ENCODE measurements at regions of chr7 and their contacts with region 1.

Region 1: DNA sequence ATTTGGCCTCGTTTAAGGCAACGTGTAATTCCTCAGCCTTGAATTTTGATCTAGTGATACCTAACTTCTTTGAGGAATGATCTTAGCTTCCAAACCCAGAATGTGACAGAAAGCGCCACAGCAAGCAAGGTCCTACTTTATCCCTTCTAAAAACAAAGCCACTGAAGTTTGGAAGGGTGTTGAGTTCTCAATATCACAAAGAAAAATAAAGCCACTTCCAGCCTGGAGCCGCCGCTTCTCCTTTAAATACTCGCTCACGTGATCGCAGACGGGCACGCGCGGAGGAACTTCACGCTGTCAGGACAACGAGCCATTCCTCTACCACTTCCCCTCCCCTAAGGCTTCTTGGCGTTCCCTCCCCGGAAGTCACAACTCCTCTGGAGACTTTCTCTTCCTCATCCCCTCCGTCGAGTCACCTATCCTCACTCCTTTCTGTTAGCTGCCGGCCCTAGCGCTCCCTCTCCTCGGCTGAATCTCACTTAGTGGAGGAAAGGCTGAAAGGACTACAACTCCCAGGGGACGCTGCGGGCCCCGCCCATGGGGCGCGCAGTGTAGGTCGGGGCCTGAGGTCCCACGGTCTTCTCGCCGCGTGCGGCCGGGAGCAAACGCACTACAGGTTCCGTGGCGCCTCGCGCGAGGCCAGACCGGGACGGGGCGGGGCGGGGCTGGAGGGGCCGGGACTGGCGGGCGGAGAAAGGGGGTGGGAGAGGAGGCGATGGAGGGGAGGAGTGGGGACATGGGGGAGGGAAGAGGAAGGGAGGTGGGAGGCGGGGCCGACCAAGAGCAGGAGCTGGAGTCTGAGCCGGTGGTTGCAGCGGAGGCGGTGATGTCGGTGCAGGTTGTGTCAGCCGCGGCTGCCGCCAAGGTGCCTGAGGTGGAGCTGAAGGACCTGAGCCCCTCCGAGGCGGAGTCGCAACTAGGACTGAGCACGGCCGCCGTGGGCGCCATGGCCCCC is at the start of gene AHCYL2:
- DNase-seq: peak; percentile 95 to 98 (median 96)
- H3K4me3 ChIP-seq: peak within 1 kb of the TSS; percentile 87 to 98
- H3K4me3 Mint-ChIP-seq: peak within 1 kb of the TSS; percentile 94 to 98 (median 95)
- H3K27ac ChIP-seq: peak within 1 kb of the TSS; percentile 80
- H3K27ac Mint-ChIP-seq: peak within 1 kb of the TSS; percentile 86 to 99 (median 97)
- H3K4me1 ChIP-seq: peaks cover 28% of the 10 kb centered on the region
- H3K4me1 Mint-ChIP-seq: peaks cover 28 to 48% (median 35%) of the 10 kb centered on the region in 4 donors
- H3K27me3 ChIP-seq: no peaks in the 10 kb centered on the region
- H3K27me3 Mint-ChIP-seq: no peaks in the 10 kb centered on the region
- total RNA-seq, gene AHCYL2: 15.4 to 16.5 TPM

Region 2: DNA sequence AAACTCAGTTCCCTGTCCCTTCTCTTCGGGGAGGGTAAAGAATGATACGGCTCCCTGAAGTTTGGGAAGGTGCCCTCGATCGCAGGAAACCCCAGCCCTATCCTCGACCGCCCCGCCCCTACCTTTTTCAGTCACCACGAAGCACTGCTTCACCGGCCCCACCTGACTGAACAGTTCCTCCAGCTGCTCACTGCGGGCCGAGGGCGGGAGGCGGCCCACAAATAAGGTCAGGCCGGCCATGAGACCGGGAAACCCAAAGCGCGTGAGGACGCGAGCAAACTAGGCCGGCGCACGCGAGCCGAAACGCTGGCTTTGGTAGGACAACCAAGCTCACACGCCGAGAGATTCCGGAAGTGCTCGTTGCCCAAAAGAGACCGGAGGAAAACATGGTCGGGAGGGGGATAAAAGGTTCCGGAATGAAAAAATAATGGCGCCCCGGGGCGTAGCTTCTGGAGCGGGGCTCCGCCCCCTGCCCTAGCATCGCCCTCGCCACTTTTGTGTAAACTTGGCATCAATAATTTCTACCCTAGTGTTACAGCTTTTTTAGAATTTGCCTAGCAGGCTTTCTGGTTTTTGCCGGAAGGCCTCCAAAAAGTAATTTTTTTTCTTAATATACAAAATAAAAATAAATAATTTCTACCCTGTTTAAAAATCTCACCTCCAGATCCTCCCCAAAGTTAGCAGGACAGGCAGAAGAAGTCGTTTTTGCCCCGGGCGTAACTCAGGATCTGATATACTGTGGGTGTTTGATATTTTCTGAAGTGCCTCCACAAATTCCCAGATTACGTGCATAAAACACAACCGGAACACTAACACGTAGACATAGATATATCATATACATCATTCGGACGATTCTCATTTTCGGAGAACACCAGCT is 880.7 kb before region 1 on chr7 and contains the start of gene RBM28:
- CTCF ChIA-PET with region 1: no interaction called
- POLR2A ChIA-PET with region 1: interaction called, 5 read pairs
- intact Hi-C with region 1: loop called (anchors 1 kb)
- DNase-seq: peak; percentile 88 to 93 (median 90)
- H3K4me3 ChIP-seq: peak within 1 kb of the TSS; percentile 82 to 83
- H3K4me3 Mint-ChIP-seq: peak within 1 kb of the TSS; percentile 95 to 98 (median 96)
- H3K27ac ChIP-seq: peak within 1 kb of the TSS; percentile 69
- H3K27ac Mint-ChIP-seq: peak within 1 kb of the TSS; percentile 92 to 97 (median 96)
- H3K4me1 ChIP-seq: peaks cover 27% of the 10 kb centered on the region
- H3K4me1 Mint-ChIP-seq: peaks cover 20 to 40% (median 29%) of the 10 kb centered on the region in 4 donors
- H3K27me3 ChIP-seq: no peaks in the 10 kb centered on the region
- H3K27me3 Mint-ChIP-seq: peaks cover 2 to 3% of the 10 kb centered on the region in 2 donors
- total RNA-seq, gene RBM28: 43.4 to 48.3 TPM

Region 3: DNA sequence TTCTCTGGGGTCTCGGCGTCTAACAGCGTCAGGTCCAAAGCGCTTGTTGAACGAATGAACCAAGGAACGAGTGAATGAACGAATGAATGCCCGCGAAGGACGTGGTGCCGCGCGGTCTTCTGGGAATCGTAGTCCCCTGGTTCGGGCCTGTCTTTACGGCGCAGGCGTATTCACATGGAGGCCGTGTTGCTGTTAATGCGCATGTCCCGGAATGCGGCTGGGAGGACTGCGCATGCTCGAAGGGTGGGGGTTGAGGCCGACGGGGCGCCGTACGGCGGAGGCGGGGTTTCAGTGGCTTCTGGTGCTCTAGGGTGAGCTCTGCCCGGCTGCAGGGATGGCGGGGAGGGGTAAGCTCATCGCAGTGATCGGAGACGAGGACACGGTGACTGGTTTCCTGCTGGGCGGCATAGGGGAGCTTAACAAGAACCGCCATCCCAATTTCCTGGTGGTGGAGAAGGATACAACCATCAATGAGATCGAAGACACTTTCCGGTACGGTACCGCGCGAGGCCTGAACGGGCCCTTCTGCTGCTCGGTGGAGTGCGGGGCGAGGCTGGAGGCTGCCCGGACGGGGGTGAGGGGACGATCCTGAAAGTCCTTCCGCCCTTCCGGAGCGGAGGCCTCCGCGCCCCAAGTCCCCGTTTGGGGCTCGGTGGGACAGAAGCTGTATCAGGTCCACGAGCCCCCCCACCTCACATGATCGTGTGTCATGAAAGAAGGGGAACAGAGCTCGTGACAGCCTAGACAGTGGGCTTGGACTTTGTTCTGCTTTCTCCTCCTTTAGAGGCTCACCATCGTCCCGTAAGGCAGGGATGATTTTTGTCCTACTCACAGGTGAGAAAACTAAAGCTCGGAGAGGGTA is 361.7 kb before region 1 on chr7 and contains the start of gene ATP6V1F:
- CTCF ChIA-PET with region 1: no interaction called
- POLR2A ChIA-PET with region 1: no interaction called
- intact Hi-C with region 1: loop called (anchors 1 kb)
- DNase-seq: peak; percentile 98 to 100 (median 99)
- H3K4me3 ChIP-seq: peak within 1 kb of the TSS; percentile 61 to 89
- H3K4me3 Mint-ChIP-seq: peak within 1 kb of the TSS; percentile 95 to 100 (median 98)
- H3K27ac ChIP-seq: peak within 1 kb of the TSS; percentile 79
- H3K27ac Mint-ChIP-seq: peak within 1 kb of the TSS; percentile 90 to 100 (median 97)
- H3K4me1 ChIP-seq: peaks cover 20% of the 10 kb centered on the region
- H3K4me1 Mint-ChIP-seq: peaks cover 21 to 42% (median 31%) of the 10 kb centered on the region in 4 donors
- H3K27me3 ChIP-seq: no peaks in the 10 kb centered on the region
- H3K27me3 Mint-ChIP-seq: no peaks in the 10 kb centered on the region
- total RNA-seq, gene ATP6V1F: 74.6 to 75.5 TPM

Region 4: GRCh38 chr7:129041142-129042085 is 183.1 kb before region 1 on chr7:
- CTCF ChIA-PET with region 1: no interaction called
- POLR2A ChIA-PET with region 1: no interaction called
- intact Hi-C with region 1: no loop called
- DNase-seq: no peak
- H3K4me3 ChIP-seq: no peak overlapping the region
- H3K4me3 Mint-ChIP-seq: peak overlapping the region in 2 of 8 donors; percentile 1 to 11
- H3K27ac ChIP-seq: no peak overlapping the region
- H3K27ac Mint-ChIP-seq: peak overlapping the region in 5 of 7 donors; percentile 6 to 79 (median 22)
- H3K4me1 ChIP-seq: peaks cover 58% of the 10 kb centered on the region
- H3K4me1 Mint-ChIP-seq: peaks cover 52 to 81% (median 66%) of the 10 kb centered on the region in 4 donors
- H3K27me3 ChIP-seq: no peaks in the 10 kb centered on the region
- H3K27me3 Mint-ChIP-seq: no peaks in the 10 kb centered on the region

Region 5: DNA sequence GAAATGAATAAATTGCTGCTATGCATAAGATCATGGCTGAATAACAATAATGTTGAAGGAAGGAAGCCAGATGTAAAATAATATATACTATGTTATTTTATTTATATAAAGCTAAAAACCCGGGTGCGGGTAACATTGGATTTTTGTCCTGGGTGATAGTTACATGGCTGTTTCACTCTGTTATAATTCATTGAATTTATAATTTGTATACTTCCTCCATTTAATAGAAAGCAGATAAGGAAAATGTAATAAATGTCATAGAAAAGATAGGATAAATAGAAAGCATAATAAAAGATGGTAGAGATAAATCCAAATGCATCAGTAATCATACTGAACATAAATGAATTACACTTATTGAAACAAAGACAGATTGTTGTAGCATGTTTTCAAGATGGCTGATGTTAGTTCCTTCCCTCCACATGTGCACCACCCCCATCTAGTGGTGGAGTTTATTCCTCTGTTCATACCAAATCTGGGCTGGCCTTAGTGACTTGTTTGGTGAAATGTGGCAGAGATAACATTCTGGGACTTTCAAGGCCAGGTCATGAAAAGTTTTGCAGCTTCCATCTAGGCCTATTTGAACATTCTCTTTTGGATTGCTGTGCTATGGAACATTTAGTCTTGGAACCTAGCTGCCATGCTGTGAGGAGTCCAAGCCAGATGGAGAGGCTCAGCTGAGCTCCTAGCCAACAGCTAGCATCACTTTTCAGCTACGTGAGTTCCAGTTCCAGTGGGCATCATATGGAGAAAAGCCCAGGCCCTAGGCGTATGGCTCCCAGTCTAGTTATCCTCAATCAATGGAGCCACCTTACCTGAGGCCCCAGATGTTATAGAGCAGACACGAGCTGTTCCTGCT is 47.2 kb after region 1 on chr7:
- CTCF ChIA-PET with region 1: interaction called, 358 read pairs
- POLR2A ChIA-PET with region 1: interaction called, 7 read pairs
- intact Hi-C with region 1: loop called (anchors 1 kb)
- DNase-seq: peak; percentile 70 to 73 (median 72)
- H3K4me3 ChIP-seq: no peak overlapping the region
- H3K4me3 Mint-ChIP-seq: peak overlapping the region in 4 of 8 donors; percentile 22 to 76 (median 50)
- H3K27ac ChIP-seq: no peak overlapping the region
- H3K27ac Mint-ChIP-seq: peak overlapping the region in 3 of 7 donors; percentile 33 to 60 (median 36)
- H3K4me1 ChIP-seq: no peaks in the 10 kb centered on the region
- H3K4me1 Mint-ChIP-seq: peaks cover 0 to 6% (median 5%) of the 10 kb centered on the region in 4 donors
- H3K27me3 ChIP-seq: no peaks in the 10 kb centered on the region
- H3K27me3 Mint-ChIP-seq: no peaks in the 10 kb centered on the region

Region 6: GRCh38 chr7:129417071-129417470 is 192.5 kb after region 1 on chr7:
- CTCF ChIA-PET with region 1: no interaction called
- POLR2A ChIA-PET with region 1: no interaction called
- intact Hi-C with region 1: no loop called
- DNase-seq: no peak
- H3K4me3 ChIP-seq: no peak overlapping the region
- H3K4me3 Mint-ChIP-seq: no peak overlapping the region
- H3K27ac ChIP-seq: no peak overlapping the region
- H3K27ac Mint-ChIP-seq: no peak overlapping the region
- H3K4me1 ChIP-seq: no peaks in the 10 kb centered on the region
- H3K4me1 Mint-ChIP-seq: no peaks in the 10 kb centered on the region
- H3K27me3 ChIP-seq: no peaks in the 10 kb centered on the region
- H3K27me3 Mint-ChIP-seq: no peaks in the 10 kb centered on the region

Region 7: DNA sequence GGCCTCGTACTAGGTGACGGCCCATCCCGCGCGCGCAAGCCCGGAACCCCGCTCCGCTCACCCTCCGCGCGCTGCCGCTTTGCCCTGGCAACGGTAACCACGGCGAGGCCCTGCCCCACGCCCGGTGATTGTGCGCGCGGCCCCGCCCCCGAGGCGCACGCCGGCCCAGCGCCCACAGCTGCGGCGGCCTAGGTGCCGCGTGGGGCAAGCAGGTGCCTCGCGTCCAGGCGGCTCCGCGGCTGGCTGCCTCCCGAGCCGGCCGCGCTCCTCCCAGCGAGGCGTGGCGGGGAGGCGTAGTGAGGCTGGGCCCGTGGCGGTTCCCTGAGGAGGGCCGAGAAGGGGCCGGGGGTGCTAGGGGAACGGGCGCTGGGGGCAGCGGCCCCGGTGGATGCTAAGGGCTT is 277.8 kb after region 1 on chr7 and contains the start of gene SMKR1:
- CTCF ChIA-PET with region 1: no interaction called
- POLR2A ChIA-PET with region 1: no interaction called
- intact Hi-C with region 1: loop called (anchors 1 kb)
- DNase-seq: peak; percentile 93 to 96 (median 96)
- H3K4me3 ChIP-seq: peak within 1 kb of the TSS; percentile 18 to 55
- H3K4me3 Mint-ChIP-seq: peak within 1 kb of the TSS; percentile 85 to 91 (median 88)
- H3K27ac ChIP-seq: peak within 1 kb of the TSS; percentile 66
- H3K27ac Mint-ChIP-seq: peak within 1 kb of the TSS; percentile 87 to 97 (median 93)
- H3K4me1 ChIP-seq: peaks cover 6% of the 10 kb centered on the region
- H3K4me1 Mint-ChIP-seq: peaks cover 6 to 18% (median 12%) of the 10 kb centered on the region in 4 donors
- H3K27me3 ChIP-seq: no peaks in the 10 kb centered on the region
- H3K27me3 Mint-ChIP-seq: no peaks in the 10 kb centered on the region
- total RNA-seq, gene SMKR1: 1.2 to 1.5 TPM

Region 8: DNA sequence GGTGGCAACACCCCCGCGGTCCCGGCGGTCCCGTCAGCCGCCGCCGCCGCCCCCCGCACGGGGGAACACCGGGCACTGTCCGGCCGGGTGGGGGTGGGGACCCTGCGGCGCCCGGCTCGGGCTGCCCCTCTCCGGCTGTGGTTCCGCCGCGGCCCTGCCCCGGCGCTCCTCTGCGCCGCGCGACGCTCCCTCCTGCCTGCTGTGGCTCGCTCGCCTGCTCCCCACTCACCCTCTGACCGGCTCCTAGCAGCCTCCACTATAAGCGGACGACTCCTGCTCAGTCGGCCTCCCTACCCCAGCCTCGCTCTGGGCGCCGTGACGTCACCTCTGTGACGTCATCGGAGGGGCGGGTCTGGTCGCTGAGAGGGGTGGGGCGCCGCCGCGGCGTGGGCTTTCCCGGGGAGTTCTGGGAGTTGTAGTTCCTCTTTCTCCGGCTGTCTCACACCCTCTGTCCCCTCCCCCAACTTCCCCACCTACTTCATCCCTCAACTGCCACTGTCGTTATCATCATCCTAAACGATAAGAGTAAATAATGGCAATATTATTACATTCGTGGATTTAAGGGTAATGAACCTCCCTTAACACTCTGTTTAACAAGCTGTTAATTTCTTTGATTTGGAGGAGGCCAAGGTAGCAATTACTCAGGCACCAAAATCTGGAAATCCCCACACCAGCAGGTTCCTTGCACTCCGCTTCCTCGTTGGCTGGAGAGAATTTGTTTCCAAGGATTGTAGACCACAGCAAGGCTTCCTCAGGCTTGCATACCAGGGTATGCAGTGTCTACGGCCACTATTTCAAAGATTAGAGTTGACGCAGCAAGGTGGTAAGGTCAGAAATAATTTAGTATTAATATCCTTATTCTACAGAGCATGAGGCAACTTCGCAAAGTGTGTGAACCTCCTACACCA is 728.4 kb after region 1 on chr7 and contains the start of gene UBE2H:
- CTCF ChIA-PET with region 1: no interaction called
- POLR2A ChIA-PET with region 1: no interaction called
- intact Hi-C with region 1: loop called (anchors 2 kb)
- DNase-seq: peak; percentile 83 to 89 (median 86)
- H3K4me3 ChIP-seq: peak within 1 kb of the TSS; percentile 53 to 85
- H3K4me3 Mint-ChIP-seq: peak within 1 kb of the TSS; percentile 95 to 100 (median 99)
- H3K27ac ChIP-seq: peak within 1 kb of the TSS; percentile 96
- H3K27ac Mint-ChIP-seq: peak within 1 kb of the TSS in 6 of 7 donors; percentile 94 to 100 (median 100)
- H3K4me1 ChIP-seq: peaks cover 42% of the 10 kb centered on the region
- H3K4me1 Mint-ChIP-seq: peaks cover 5 to 16% (median 7%) of the 10 kb centered on the region in 4 donors
- H3K27me3 ChIP-seq: no peaks in the 10 kb centered on the region
- H3K27me3 Mint-ChIP-seq: peaks cover 0 to 2% of the 10 kb centered on the region in 2 donors
- total RNA-seq, gene UBE2H: 42.6 to 43.8 TPM

Region 9: GRCh38 chr7:131183611-131184119 is 1959.1 kb after region 1 on chr7:
- CTCF ChIA-PET with region 1: no interaction called
- POLR2A ChIA-PET with region 1: no interaction called
- intact Hi-C with region 1: no loop called
- DNase-seq: peak; percentile 21 to 50 (median 36)
- H3K4me3 ChIP-seq: no peak overlapping the region
- H3K4me3 Mint-ChIP-seq: peak overlapping the region in 5 of 8 donors; percentile 36 to 70 (median 45)
- H3K27ac ChIP-seq: peak overlapping the region; percentile 21
- H3K27ac Mint-ChIP-seq: peak overlapping the region; percentile 43 to 87 (median 82)
- H3K4me1 ChIP-seq: peaks cover 32% of the 10 kb centered on the region
- H3K4me1 Mint-ChIP-seq: peaks cover 22 to 37% (median 27%) of the 10 kb centered on the region in 4 donors
- H3K27me3 ChIP-seq: no peaks in the 10 kb centered on the region
- H3K27me3 Mint-ChIP-seq: peaks cover 0 to 2% of the 10 kb centered on the region in 2 donors